B cell (primary cell): ENCODE measurements at regions of chr17 and their contacts with region 1.

Region 1: GRCh38 chr17:31882571-31882970 is 18.9 kb downstream of the UTP6 start:
- DNase-seq: peak; percentile 68
- ATAC-seq: peak; percentile 76
- H3K4me3 ChIP-seq: peak overlapping the region in 1 of 5 experiments; percentile 8
- H3K4me3 Mint-ChIP-seq: peak overlapping the region; percentile 61
- H3K27ac ChIP-seq: peak overlapping the region; percentile 54 to 75
- H3K27ac Mint-ChIP-seq: peak overlapping the region; percentile 88
- H3K4me1 ChIP-seq: peaks cover 19 to 39% of the 10 kb centered on the region in 2 donors
- H3K4me1 Mint-ChIP-seq: peaks cover 26% of the 10 kb centered on the region
- H3K27me3 ChIP-seq: no peaks in the 10 kb centered on the region
- H3K27me3 Mint-ChIP-seq: no peaks in the 10 kb centered on the region
- CTCF ChIP-seq: no peak

Region 2: DNA sequence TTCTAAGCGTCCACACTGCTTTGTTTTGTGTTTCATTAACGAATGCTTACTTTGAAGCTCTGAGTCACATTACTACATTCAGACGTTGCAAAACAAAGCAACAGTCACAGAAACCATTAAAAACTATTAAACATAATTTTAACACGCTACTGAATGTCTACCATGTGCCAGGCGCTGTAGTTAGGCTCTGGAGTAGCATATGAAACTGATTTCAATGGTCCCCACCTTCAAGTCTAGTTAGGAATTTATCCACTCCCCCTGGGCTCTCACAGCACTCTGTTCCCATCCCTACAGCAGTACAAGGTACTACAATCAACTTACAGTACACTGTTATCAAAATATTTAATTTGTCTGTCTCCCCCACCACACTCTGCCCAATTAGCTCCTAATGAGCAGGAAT is 18.3 kb after region 1 on chr17:
- CTCF ChIA-PET with region 1: interaction called, 53 read pairs
- POLR2A ChIA-PET with region 1: interaction called, 7 read pairs
- intact Hi-C with region 1: loop called (anchors 2 kb)
- DNase-seq: no peak
- ATAC-seq: no peak
- H3K4me3 ChIP-seq: peak overlapping the region; percentile 76 to 95 (median 90)
- H3K4me3 Mint-ChIP-seq: no peak overlapping the region
- H3K27ac ChIP-seq: peak overlapping the region; percentile 47 to 78
- H3K27ac Mint-ChIP-seq: no peak overlapping the region
- H3K4me1 ChIP-seq: peaks cover 6 to 10% of the 10 kb centered on the region in 2 donors
- H3K4me1 Mint-ChIP-seq: peaks cover 5% of the 10 kb centered on the region
- H3K27me3 ChIP-seq: no peaks in the 10 kb centered on the region
- H3K27me3 Mint-ChIP-seq: no peaks in the 10 kb centered on the region
- CTCF ChIP-seq: no peak